ENCODE measurements at regions of chr1 and their contacts with region 1.

Region 1: DNA sequence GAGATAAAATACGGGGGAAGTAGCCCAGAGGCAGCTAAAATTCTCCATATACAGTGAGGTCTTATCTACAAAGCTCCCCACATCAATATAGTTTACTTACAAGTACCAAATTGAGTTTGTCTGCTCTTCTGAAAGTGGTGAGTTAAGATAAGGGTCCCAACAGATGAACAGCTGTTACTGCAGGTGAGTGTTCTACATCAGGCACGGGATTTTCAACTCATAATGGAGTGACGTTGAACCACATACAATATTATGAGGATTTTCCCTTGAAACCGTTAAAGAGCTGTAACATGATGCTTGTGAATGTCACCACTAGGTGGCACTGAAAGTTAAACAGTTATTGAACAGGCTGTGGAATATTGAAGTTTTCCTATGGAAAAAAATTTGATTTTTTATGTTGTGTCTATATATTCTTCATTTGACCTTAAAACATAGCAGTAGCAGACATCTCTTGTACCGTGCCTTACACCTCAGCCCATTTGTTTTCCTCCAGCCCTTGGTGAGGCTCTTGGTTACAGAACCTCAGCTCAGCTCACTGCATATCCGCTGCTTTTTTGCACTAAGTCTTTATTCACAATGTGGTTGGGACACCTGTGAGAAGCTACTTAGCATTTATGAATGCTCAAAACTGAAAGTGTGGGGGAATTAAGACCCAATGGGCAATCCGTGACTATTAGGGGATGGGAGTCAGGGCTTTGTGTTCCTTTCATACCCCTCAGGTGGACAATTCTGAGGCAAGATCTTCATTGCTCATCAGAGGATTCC is 23.2 kb downstream of the CD1D start:
- DNase-seq: peak in 1 of 2 donors; percentile 32
- H3K4me3 ChIP-seq: no peak overlapping the region
- CTCF ChIP-seq: peak in 1 of 3 donors; percentile 21
- POLR2A ChIP-seq: no peak

Region 2: DNA sequence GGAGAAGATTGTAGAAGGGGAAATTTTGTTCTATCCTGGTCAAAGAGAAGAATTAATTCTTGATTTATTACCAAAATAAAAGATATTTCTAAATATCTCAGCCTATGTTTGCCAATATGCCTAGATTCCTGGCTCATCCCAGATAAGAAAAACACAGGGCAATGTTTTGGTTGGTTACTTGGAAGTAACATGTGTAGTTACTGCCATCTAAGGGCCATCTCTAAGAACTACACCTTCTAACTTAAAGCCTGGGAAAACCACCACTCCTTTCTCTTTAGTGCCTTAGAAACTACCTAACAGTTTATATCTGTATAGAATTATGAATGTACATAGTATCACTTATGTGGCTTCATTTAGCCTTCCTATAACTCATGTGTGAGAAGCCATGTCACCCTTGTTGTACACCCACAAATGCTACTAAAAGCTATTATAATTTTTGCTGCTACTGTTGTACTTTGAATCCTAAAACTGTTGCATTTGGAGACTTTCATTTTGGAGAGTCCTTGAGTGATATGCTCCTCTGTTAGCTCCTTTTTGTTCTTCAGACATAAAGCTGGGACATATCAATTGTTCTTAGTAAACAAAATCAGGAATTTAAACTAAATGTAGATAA is 868.2 kb after region 1 on chr1:
- intact Hi-C with region 1: loop called (anchors 10 kb)
- DNase-seq: no peak
- H3K4me3 ChIP-seq: no peak overlapping the region
- CTCF ChIP-seq: no peak
- POLR2A ChIP-seq: no peak

Measured in lower leg skin (tissue), 4 donors.